ENCODE measurements at regions of chr19 and their contacts with region 1.

Region 1: GRCh38 chr19:48363810-48364563 is at the starts of genes SYNGR4 and TMEM143:
- DNase-seq: peak; percentile 98
- H3K4me3 Mint-ChIP-seq: peak within 1 kb of the TSS; percentile 85
- H3K27ac Mint-ChIP-seq: peak within 1 kb of the TSS; percentile 87
- H3K4me1 Mint-ChIP-seq: peaks cover 6% of the 10 kb centered on the region
- H3K27me3 Mint-ChIP-seq: no peaks in the 10 kb centered on the region
- total RNA-seq, gene SYNGR4: 0.61 TPM in 1 of 2 replicates, not detected in the other
- total RNA-seq, gene TMEM143: 7.7 and 14.9 TPM in 2 replicates

Region 2: GRCh38 chr19:47514869-47515588 is 849.0 kb before region 1 on chr19 and contains the start of gene NAPA:
- intact Hi-C with region 1: loop called (anchors 10 kb)
- DNase-seq: peak; percentile 100
- H3K4me3 Mint-ChIP-seq: peak within 1 kb of the TSS; percentile 95
- H3K27ac Mint-ChIP-seq: peak within 1 kb of the TSS; percentile 92
- H3K4me1 Mint-ChIP-seq: peaks cover 63% of the 10 kb centered on the region
- H3K27me3 Mint-ChIP-seq: peaks cover 4% of the 10 kb centered on the region
- total RNA-seq, gene NAPA: 66.4 and 68.7 TPM in 2 replicates

Region 3: GRCh38 chr19:48203732-48204628 is 160.0 kb before region 1 on chr19:
- intact Hi-C with region 1: loop called (anchors 1 kb)
- DNase-seq: peak; percentile 92
- H3K4me3 Mint-ChIP-seq: no peak overlapping the region
- H3K27ac Mint-ChIP-seq: no peak overlapping the region
- H3K4me1 Mint-ChIP-seq: peaks cover 13% of the 10 kb centered on the region
- H3K27me3 Mint-ChIP-seq: no peaks in the 10 kb centered on the region

Region 4: GRCh38 chr19:48391107-48391986 is 27.4 kb after region 1 on chr19 and contains the start of gene KDELR1:
- intact Hi-C with region 1: loop called (anchors 1 kb)
- DNase-seq: peak; percentile 69
- H3K4me3 Mint-ChIP-seq: peak within 1 kb of the TSS; percentile 98
- H3K27ac Mint-ChIP-seq: peak within 1 kb of the TSS; percentile 98
- H3K4me1 Mint-ChIP-seq: peaks cover 13% of the 10 kb centered on the region
- H3K27me3 Mint-ChIP-seq: peaks cover 36% of the 10 kb centered on the region
- total RNA-seq, gene KDELR1: 70.9 and 74.2 TPM in 2 replicates

Region 5: DNA sequence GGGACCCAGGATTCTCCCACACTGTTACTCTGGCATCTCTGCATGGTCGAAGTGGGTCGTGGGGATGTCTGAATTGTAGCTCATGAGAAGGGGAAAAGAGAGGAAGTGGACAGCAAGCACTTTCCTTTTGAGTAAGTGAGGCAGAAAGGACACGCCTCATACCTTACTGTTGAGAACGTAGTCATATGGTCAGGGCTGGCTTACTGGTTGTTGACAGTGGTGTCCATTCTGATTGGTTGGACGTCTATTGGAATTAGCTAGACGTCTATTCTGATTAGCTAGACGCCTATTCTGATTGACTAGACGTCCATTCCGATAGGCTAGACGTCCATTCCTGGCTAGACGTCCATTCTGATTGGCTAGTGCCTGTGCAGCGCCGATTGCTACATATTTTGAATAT is 41.9 kb after region 1 on chr19:
- intact Hi-C with region 1: no loop called
- DNase-seq: no peak
- H3K4me3 Mint-ChIP-seq: no peak overlapping the region
- H3K27ac Mint-ChIP-seq: no peak overlapping the region
- H3K4me1 Mint-ChIP-seq: no peaks in the 10 kb centered on the region
- H3K27me3 Mint-ChIP-seq: peaks cover 16% of the 10 kb centered on the region

Region 6: DNA sequence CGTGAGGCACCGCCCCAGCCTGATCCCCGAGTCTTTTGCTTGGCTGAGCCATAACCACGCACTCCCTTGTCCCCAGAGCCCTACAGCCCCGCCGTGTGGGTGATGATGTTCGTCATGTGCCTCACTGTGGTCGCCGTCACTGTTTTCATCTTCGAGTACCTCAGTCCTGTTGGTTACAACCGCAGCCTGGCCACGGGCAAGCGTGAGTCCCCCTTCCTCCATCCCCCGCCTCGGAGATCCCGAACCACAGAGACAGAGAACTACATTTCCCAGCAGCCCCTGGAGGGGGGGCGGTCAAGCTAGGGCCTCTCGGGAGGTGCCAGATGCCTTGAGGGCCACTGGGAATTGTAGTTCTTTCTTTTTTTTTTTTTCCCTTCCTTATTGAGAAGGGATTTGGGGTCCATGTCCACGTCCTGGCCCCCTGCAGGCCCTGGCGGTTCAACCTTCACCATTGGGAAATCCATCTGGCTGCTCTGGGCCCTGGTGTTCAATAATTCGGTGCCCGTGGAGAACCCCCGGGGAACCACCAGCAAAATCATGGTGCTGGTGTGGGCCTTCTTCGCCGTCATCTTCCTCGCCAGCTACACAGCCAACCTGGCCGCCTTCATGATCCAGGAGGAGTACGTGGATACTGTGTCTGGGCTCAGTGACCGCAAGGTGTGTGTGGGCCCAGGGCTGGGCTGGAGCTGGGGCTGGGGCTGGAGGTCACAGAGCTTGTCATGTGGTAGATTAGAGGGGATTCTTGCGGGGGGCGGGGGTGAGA is 55.4 kb after region 1 on chr19:
- intact Hi-C with region 1: loop called (anchors 1 kb)
- DNase-seq: peak; percentile 66
- H3K4me3 Mint-ChIP-seq: peak overlapping the region; percentile 75
- H3K27ac Mint-ChIP-seq: peak overlapping the region; percentile 65
- H3K4me1 Mint-ChIP-seq: peaks cover 26% of the 10 kb centered on the region
- H3K27me3 Mint-ChIP-seq: peaks cover 18% of the 10 kb centered on the region

Region 7: DNA sequence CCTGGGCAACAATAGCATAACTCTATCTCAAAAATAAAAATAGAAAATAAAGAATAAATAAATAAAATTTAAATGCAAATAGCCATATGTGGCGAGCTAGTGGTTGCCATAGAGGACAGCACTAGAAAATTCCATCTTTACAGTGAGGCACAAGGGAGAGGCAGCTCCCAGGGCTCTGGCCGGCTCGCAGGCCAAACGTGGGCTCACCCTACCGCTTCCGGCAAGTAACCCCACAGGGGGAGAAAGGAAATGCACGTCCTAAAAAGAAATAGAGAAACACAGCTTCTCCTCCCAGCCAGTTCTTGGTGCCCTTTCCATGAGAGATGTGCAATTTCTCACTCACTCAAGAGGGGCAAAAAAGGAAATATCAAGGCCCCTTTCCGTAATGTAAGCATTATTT is 69.3 kb after region 1 on chr19:
- intact Hi-C with region 1: no loop called
- DNase-seq: no peak
- H3K4me3 Mint-ChIP-seq: no peak overlapping the region
- H3K27ac Mint-ChIP-seq: no peak overlapping the region
- H3K4me1 Mint-ChIP-seq: no peaks in the 10 kb centered on the region
- H3K27me3 Mint-ChIP-seq: peaks cover 13% of the 10 kb centered on the region

Region 8: GRCh38 chr19:48492925-48493717 is 129.1 kb after region 1 on chr19:
- intact Hi-C with region 1: loop called (anchors 5 kb)
- DNase-seq: peak; percentile 82
- H3K4me3 Mint-ChIP-seq: peak overlapping the region; percentile 68
- H3K27ac Mint-ChIP-seq: peak overlapping the region; percentile 29
- H3K4me1 Mint-ChIP-seq: peaks cover 27% of the 10 kb centered on the region
- H3K27me3 Mint-ChIP-seq: peaks cover 21% of the 10 kb centered on the region

Region 9: GRCh38 chr19:48637170-48637947 is 273.4 kb after region 1 on chr19 and contains the start of gene DBP:
- intact Hi-C with region 1: loop called (anchors 2 kb)
- DNase-seq: peak; percentile 98
- H3K4me3 Mint-ChIP-seq: peak within 1 kb of the TSS; percentile 97
- H3K27ac Mint-ChIP-seq: peak within 1 kb of the TSS; percentile 100
- H3K4me1 Mint-ChIP-seq: peaks cover 29% of the 10 kb centered on the region
- H3K27me3 Mint-ChIP-seq: peaks cover 4% of the 10 kb centered on the region
- total RNA-seq, gene DBP: 8.5 and 9.1 TPM in 2 replicates